Activated CD4-positive, alpha-beta memory T cell treated with anti-CD3 and anti-CD28 coated beads, Interleukin-2, amount 10 ng/mL, durations not matched to agents 7 days and 5 days (primary cell): ENCODE measurements at regions of chr19 and their contacts with region 1.

Region 1: GRCh38 chr19:43416951-43417623 is 2.4 kb downstream of the TEX101 start:
- DNase-seq: no peak
- H3K4me3 Mint-ChIP-seq: no peak overlapping the region
- H3K27ac Mint-ChIP-seq: no peak overlapping the region
- H3K4me1 Mint-ChIP-seq: no peaks in the 10 kb centered on the region
- H3K27me3 Mint-ChIP-seq: peaks cover 4% of the 10 kb centered on the region

Region 2: GRCh38 chr19:43395561-43395960 is 21.5 kb before region 1 on chr19:
- CTCF ChIA-PET with region 1: no interaction called
- POLR2A ChIA-PET with region 1: no interaction called
- DNase-seq: no peak
- H3K4me3 Mint-ChIP-seq: no peak overlapping the region
- H3K27ac Mint-ChIP-seq: no peak overlapping the region
- H3K4me1 Mint-ChIP-seq: no peaks in the 10 kb centered on the region
- H3K27me3 Mint-ChIP-seq: peaks cover 15% of the 10 kb centered on the region

Region 3: DNA sequence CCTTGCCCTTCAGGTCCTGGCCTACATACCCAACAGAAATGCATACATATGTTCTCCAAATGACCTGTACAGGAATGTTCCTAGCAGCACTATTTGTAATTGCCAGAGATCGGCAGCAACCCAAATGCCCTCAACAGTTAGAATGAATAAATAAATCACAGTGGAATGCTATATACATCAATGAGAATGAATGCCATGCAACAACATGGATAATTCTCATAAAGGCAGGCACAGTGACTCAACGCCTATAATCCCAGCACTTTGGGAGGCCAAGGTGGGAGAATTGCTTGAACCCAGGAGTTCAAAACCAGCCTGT is 16.2 kb after region 1 on chr19:
- CTCF ChIA-PET with region 1: interaction called, 18 read pairs
- POLR2A ChIA-PET with region 1: interaction called, 3 read pairs
- DNase-seq: no peak
- H3K4me3 Mint-ChIP-seq: no peak overlapping the region
- H3K27ac Mint-ChIP-seq: no peak overlapping the region
- H3K4me1 Mint-ChIP-seq: peaks cover 35% of the 10 kb centered on the region
- H3K27me3 Mint-ChIP-seq: peaks cover 2% of the 10 kb centered on the region